K562 (cell line): ENCODE measurements at regions of chr4 and their contacts with region 1.

Region 1: GRCh38 chr4:1899149-1900086 is 28.2 kb downstream of the NSD2 start:
- DNase-seq: peak; percentile 85 to 87 (median 86)
- ATAC-seq: peak; percentile 95
- H3K4me3 ChIP-seq: no peak overlapping the region
- H3K27ac ChIP-seq: no peak overlapping the region
- H3K4me1 ChIP-seq: peaks cover 5% of the 10 kb centered on the region in 2 experiments; a peak in 4 of 5 replicates
- H3K27me3 ChIP-seq: no peaks in the 10 kb centered on the region
- CTCF ChIP-seq: peak; percentile 81 to 90 (median 88)
- EP300 ChIP-seq: no peak
- POLR2A ChIP-seq: no peak
- RAD21 ChIP-seq: peak; percentile 88 to 90

Region 2: DNA sequence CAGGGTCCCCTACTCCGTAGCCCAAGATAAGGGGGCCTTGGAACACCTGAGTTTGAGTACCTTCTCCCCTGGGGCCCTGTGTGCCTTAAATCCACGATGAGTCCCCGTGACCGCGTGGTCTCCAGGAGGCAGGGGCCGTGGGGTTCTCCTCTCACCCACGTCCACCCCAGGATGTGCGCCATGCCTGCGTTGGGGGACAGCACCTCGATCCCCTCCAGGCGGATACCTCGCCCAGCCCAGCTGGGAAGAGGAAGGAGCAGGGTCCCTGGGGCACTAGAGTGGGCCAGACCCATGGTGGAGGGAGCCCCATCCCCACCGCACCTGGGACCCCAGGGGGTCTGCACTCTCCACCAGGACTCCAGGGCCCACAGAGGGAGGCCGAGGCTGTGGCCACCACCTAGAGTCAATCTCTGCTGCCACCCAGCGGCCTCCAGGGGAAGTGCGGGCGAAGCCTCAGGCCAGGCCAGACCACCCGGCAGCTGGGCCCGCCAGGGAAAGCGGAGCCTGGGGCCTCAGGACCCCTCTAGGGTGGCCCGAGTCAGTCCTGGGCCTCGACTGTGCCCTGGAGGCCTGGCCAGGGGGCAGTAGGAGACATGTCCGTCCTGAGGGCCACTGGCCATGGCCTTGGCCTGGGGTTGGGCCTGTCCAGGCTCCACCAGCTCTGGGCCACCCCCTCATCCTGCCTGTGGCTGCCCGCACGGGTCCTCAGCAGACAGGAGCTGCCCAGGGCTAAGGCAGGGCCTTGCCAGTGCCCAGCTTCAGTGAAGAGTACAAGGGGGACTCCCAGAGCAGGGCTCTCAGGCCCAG is 270.3 kb before region 1 on chr4:
- CTCF ChIA-PET with region 1: no interaction called
- POLR2A ChIA-PET with region 1: no interaction called
- in situ Hi-C with region 1: no loop called
- intact Hi-C with region 1: no loop called
- DNase-seq: peak; percentile 72 to 88 (median 83)
- ATAC-seq: peak; percentile 96
- H3K4me3 ChIP-seq: no peak overlapping the region
- H3K27ac ChIP-seq: no peak overlapping the region
- H3K4me1 ChIP-seq: peaks cover 12 to 36% of the 10 kb centered on the region in 2 experiments; a peak in 4 of 5 replicates
- H3K27me3 ChIP-seq: peaks cover 0 to 5% of the 10 kb centered on the region in 2 experiments; a peak in 1 of 5 replicates
- CTCF ChIP-seq: peak; percentile 88 to 94 (median 91)
- EP300 ChIP-seq: no peak
- POLR2A ChIP-seq: no peak
- RAD21 ChIP-seq: peak; percentile 73 to 87

Region 3: DNA sequence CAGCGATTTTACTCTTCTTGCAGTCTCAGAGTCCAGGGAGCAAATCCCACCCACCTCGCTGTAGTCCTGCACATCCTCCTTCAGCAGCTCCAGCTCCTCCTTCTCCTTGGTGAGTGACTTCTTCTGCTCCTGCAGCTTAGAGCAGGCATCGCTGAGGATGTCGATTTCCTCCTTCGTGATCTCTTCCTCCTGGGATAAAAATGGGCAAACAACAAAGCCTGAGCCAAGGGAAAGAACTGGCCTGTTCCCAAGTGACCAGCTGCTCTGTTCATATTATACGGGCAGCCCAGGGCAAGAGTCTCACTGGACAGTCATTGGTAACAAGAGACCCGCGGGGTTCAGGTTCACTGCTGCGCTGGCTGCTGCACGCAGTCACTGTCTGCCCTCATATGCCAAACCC is 80.1 kb before region 1 on chr4:
- CTCF ChIA-PET with region 1: interaction called, 3 read pairs
- POLR2A ChIA-PET with region 1: interaction called, 3 read pairs
- in situ Hi-C with region 1: loop called (anchors 5 kb)
- intact Hi-C with region 1: loop called (anchors 5 kb)
- DNase-seq: no peak
- ATAC-seq: no peak
- H3K4me3 ChIP-seq: no peak overlapping the region
- H3K27ac ChIP-seq: no peak overlapping the region
- H3K4me1 ChIP-seq: peaks cover 0 to 7% of the 10 kb centered on the region in 2 experiments; a peak in 1 of 5 replicates
- H3K27me3 ChIP-seq: no peaks in the 10 kb centered on the region
- CTCF ChIP-seq: no peak
- EP300 ChIP-seq: no peak
- POLR2A ChIP-seq: no peak
- RAD21 ChIP-seq: no peak

Region 4: DNA sequence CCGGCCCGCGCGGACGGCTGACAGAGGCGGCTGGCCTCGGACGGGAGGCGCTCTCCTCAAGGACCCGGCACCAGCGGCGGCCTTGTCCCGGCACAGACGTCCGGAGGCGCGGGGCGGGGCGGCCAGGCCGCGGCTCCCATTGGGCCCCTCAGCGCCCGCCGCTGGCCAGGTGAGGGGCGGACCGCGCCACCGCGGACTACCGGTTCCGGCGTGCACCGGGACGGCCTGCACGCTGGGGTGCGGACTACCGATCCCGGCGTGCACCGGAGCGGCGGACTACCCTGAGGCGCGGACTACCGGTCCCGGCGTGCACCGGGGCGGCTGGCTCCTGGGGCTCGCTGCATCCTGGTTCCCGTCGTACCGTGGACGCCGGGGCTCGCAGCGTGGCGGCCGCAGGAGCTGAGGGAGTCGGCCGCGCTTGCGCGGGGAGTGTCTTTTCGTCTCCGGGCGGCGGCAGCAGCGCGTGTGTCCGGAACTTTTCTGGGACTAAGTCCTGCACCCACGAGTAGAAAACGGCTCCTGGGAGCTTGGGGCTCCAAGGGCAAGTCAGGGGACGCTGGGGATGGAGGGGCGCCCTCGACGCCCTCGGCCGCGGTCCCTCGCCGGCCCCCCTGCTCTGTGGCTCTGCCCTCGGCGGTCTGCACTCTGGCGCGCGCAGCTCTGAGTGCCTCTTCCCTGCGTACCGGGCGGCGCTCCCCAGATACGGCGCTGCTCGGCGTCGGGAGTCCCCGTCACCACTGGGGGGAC is 43.2 kb before region 1 on chr4 and contains the start of gene LETM1:
- CTCF ChIA-PET with region 1: interaction called, 15 read pairs
- POLR2A ChIA-PET with region 1: interaction called, 4 read pairs
- in situ Hi-C with region 1: no loop called
- intact Hi-C with region 1: loop called (anchors 1 kb)
- DNase-seq: peak; percentile 91 to 96 (median 93)
- ATAC-seq: peak; percentile 95
- H3K4me3 ChIP-seq: peak within 1 kb of the TSS; percentile 94
- H3K27ac ChIP-seq: peak within 1 kb of the TSS; percentile 84
- H3K4me1 ChIP-seq: peaks cover 40 to 61% of the 10 kb centered on the region in 2 experiments
- H3K27me3 ChIP-seq: no peaks in the 10 kb centered on the region
- CTCF ChIP-seq: peak in 1 of 3 experiments; percentile 46; a peak in 1 of 6 replicates
- EP300 ChIP-seq: no peak
- POLR2A ChIP-seq: peak; percentile 90
- RAD21 ChIP-seq: no peak
- polyA plus RNA-seq, gene LETM1: 3.9 to 5.6 TPM

Region 5: GRCh38 chr4:1870578-1871443 is 28.6 kb before region 1 on chr4 and contains the start of gene NSD2:
- CTCF ChIA-PET with region 1: no interaction called
- POLR2A ChIA-PET with region 1: interaction called, 3 read pairs
- in situ Hi-C with region 1: no loop called
- intact Hi-C with region 1: loop called (anchors 1 kb)
- DNase-seq: peak; percentile 93 to 98 (median 94)
- ATAC-seq: peak; percentile 62
- H3K4me3 ChIP-seq: peak within 1 kb of the TSS; percentile 95
- H3K27ac ChIP-seq: peak within 1 kb of the TSS; percentile 99
- H3K4me1 ChIP-seq: peaks cover 24 to 32% of the 10 kb centered on the region in 2 experiments
- H3K27me3 ChIP-seq: no peaks in the 10 kb centered on the region
- CTCF ChIP-seq: no peak
- EP300 ChIP-seq: no peak
- POLR2A ChIP-seq: peak; percentile 85
- RAD21 ChIP-seq: no peak
- polyA plus RNA-seq, gene NSD2: 6.4 to 9.7 TPM

Region 6: DNA sequence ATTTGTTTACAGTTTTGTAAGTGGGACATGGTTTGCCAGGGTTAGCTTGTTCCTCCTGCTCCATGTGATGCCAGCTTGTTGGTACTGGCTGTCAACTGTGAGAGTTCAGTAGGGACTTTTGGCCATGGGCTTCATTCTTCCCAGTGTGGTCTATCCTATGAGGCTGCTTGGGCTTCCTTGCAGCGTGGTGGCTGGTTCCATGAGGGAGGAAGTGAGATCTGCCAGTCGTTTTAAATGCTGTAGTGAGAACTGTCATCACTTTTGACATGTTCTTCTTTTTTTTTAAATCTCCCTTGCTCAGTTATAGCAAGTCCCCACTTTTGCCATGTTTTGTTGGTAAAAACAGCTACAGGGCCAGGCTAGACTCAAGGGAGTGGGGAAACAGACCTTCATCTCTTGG is 12.4 kb before region 1 on chr4:
- CTCF ChIA-PET with region 1: no interaction called
- POLR2A ChIA-PET with region 1: interaction called, 15 read pairs
- in situ Hi-C with region 1: no loop called
- intact Hi-C with region 1: no loop called
- DNase-seq: no peak
- ATAC-seq: no peak
- H3K4me3 ChIP-seq: no peak overlapping the region
- H3K27ac ChIP-seq: peak overlapping the region; percentile 57; the same call in 1 of the 3 replicates
- H3K4me1 ChIP-seq: peaks cover 33 to 52% of the 10 kb centered on the region in 2 experiments
- H3K27me3 ChIP-seq: no peaks in the 10 kb centered on the region
- CTCF ChIP-seq: no peak
- EP300 ChIP-seq: no peak
- POLR2A ChIP-seq: no peak
- RAD21 ChIP-seq: no peak